CD8-positive, alpha-beta T cell (primary cell): ENCODE measurements at regions of chr12 and their contacts with region 1.

Region 1: GRCh38 chr12:46303039-46303666 is 34.3 kb upstream of the SLC38A1 start:
- DNase-seq: peak; percentile 7 to 84 (median 59)
- ATAC-seq: peak; percentile 81
- H3K4me3 ChIP-seq: no peak overlapping the region
- H3K4me3 Mint-ChIP-seq: no peak overlapping the region
- H3K27ac ChIP-seq: no peak overlapping the region
- H3K27ac Mint-ChIP-seq: no peak overlapping the region
- H3K4me1 ChIP-seq: peaks cover 4% of the 10 kb centered on the region
- H3K4me1 Mint-ChIP-seq: peaks cover 21% of the 10 kb centered on the region
- H3K27me3 ChIP-seq: no peaks in the 10 kb centered on the region
- H3K27me3 Mint-ChIP-seq: no peaks in the 10 kb centered on the region
- CTCF ChIP-seq: peak; percentile 87

Region 2: DNA sequence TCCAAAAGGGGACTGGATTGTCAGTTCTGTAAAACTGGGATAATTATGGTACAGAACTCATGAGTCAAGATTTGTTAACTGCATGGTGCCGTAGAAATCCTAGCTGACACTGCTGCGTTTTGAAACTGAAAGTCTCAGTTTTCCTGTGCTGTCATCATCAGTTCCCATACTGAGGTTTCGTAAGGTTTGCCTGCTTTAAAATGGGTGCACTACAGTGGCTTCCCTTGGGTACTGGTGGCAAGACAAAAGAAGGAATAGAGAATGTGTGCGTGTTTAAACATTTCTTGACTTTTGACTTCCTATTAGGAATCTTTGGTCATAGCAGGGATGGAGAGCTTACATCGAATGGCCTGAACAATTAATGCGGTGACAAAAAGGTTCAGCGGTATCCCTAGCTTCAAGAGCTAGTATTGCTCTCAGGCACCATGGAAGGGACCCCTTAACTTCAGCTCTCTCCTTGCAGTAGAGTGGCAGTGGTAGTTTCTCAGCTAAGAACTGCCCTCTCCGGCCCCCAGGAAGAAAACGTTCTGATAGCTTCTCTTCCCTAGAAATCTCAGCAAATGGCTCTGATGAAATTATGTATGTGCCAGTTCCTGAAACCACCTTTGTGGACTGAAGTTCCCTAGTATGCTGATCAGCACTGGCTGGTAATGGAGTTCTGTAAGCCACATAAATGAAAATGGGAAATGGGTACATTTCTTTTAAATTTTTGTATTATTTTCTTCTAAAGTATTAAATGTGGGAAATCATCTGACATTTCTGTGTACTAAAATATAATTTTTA is 1058.4 kb before region 1 on chr12:
- CTCF ChIA-PET with region 1: no interaction called
- POLR2A ChIA-PET with region 1: no interaction called
- intact Hi-C with region 1: no loop called
- DNase-seq: peak in 2 of 9 experiments; percentile 15 to 50
- ATAC-seq: peak; percentile 51
- H3K4me3 ChIP-seq: peak overlapping the region in 1 of 2 experiments; percentile 1
- H3K4me3 Mint-ChIP-seq: peak overlapping the region; percentile 70
- H3K27ac ChIP-seq: no peak overlapping the region
- H3K27ac Mint-ChIP-seq: peak overlapping the region; percentile 64
- H3K4me1 ChIP-seq: no peaks in the 10 kb centered on the region
- H3K4me1 Mint-ChIP-seq: peaks cover 21% of the 10 kb centered on the region
- H3K27me3 ChIP-seq: no peaks in the 10 kb centered on the region
- H3K27me3 Mint-ChIP-seq: no peaks in the 10 kb centered on the region
- CTCF ChIP-seq: no peak

Region 3: GRCh38 chr12:46124848-46125619 is 178.1 kb before region 1 on chr12:
- CTCF ChIA-PET with region 1: interaction called, 67 read pairs
- POLR2A ChIA-PET with region 1: interaction called, 4 read pairs
- intact Hi-C with region 1: loop called (anchors 1 to 2 kb)
- DNase-seq: peak; percentile 9 to 86 (median 53)
- ATAC-seq: peak; percentile 96
- H3K4me3 ChIP-seq: no peak overlapping the region
- H3K4me3 Mint-ChIP-seq: peak overlapping the region; percentile 7
- H3K27ac ChIP-seq: no peak overlapping the region
- H3K27ac Mint-ChIP-seq: peak overlapping the region; percentile 70
- H3K4me1 ChIP-seq: no peaks in the 10 kb centered on the region
- H3K4me1 Mint-ChIP-seq: peaks cover 4% of the 10 kb centered on the region
- H3K27me3 ChIP-seq: no peaks in the 10 kb centered on the region
- H3K27me3 Mint-ChIP-seq: peaks cover 7% of the 10 kb centered on the region
- CTCF ChIP-seq: peak; percentile 69

Region 4: DNA sequence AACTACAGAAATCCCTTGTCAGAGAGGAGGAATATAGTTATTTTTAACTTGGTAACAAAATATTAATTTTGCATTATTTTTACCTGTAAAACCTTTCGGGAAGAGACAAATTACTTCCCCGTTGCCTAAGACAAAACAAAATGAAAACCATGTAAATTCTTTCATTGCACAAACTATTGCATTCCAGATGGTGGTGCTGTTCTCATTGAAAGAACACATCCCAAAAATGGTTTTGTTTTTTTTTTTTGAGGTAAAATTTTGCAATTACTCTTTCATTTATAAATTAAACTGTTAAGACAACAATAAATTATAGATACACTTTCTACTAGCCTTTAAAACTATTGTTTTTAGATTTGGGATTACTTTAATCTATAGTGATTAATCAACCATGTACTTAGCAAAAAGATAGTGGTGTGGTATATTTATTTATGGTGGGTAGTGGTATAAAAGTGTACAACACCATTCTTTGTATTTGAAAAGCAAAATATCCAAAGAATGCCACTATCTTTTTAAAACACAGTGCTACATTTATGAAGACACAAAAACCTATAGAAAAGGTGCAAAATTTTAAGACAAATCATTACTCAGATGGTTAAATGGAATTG is 149.8 kb before region 1 on chr12:
- CTCF ChIA-PET with region 1: interaction called, 25 read pairs
- POLR2A ChIA-PET with region 1: interaction called, 3 read pairs
- intact Hi-C with region 1: loop called (anchors 1 kb)
- DNase-seq: peak in 2 of 9 experiments; percentile 40 to 65
- ATAC-seq: no peak
- H3K4me3 ChIP-seq: no peak overlapping the region
- H3K4me3 Mint-ChIP-seq: no peak overlapping the region
- H3K27ac ChIP-seq: no peak overlapping the region
- H3K27ac Mint-ChIP-seq: no peak overlapping the region
- H3K4me1 ChIP-seq: peaks cover 13% of the 10 kb centered on the region
- H3K4me1 Mint-ChIP-seq: peaks cover 19% of the 10 kb centered on the region
- H3K27me3 ChIP-seq: no peaks in the 10 kb centered on the region
- H3K27me3 Mint-ChIP-seq: peaks cover 1% of the 10 kb centered on the region
- CTCF ChIP-seq: peak; percentile 97

Region 5: DNA sequence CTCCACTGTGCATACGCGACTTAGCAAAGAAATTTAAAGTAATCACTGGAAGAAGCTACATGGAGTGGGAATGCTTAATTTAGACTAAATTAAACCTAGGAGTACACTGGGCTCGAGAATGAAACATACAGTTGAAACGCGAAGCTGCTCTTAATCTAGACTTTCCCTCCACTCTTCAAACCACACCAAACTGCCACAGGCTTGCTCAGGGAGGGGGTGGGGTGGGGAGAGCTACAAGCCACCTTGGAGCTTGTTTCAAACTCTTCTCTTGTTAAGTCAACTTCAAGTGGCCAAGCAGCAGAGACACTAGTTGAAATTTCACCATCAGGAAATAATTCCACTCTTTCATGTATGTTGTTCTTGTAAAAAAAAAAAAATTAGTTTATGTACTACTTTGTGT is 104.2 kb before region 1 on chr12:
- CTCF ChIA-PET with region 1: interaction called, 10 read pairs
- POLR2A ChIA-PET with region 1: no interaction called
- intact Hi-C with region 1: loop called in 1 of 2 experiments (anchors 2 kb)
- DNase-seq: peak in 1 of 9 experiments; percentile 34
- ATAC-seq: no peak
- H3K4me3 ChIP-seq: no peak overlapping the region
- H3K4me3 Mint-ChIP-seq: no peak overlapping the region
- H3K27ac ChIP-seq: no peak overlapping the region
- H3K27ac Mint-ChIP-seq: peak overlapping the region; percentile 73
- H3K4me1 ChIP-seq: peaks cover 11% of the 10 kb centered on the region
- H3K4me1 Mint-ChIP-seq: peaks cover 38% of the 10 kb centered on the region
- H3K27me3 ChIP-seq: no peaks in the 10 kb centered on the region
- H3K27me3 Mint-ChIP-seq: no peaks in the 10 kb centered on the region
- CTCF ChIP-seq: no peak

Region 6: DNA sequence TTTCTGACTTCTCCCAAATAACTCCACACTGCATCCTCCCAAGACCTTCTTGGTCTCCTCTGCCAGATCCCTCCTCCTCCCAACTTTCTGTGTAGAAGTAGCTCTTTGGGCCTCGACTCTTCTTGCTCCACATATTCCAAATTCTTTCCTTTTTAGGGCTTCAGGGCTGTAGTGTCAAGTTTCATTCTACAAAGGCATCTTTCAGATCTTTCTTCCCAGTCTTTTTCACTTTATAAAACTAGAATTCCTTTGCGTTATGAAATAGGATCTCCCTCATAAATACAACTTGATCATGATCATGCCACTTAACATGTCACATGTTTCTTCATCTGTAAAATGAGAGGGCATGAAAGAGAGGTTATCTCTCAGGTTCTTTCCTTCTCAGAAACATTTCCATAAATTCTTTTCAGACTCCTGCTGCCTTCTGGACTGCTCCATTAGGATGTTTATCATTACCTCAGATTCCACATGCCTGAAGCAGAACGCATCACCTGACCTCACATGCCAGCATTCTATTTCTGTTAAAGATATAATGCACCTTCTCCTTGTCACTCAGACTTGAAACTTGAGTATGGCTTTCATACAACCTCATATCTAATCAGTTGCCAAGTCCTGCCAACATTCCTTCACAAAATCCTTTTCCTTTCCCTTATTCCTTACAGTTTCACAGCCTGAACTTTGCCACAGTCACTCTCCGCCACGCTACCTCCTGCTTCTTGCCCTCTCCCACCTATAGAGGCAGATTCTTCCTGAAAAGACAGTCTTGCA is 42.8 kb before region 1 on chr12:
- CTCF ChIA-PET with region 1: interaction called, 3 read pairs
- POLR2A ChIA-PET with region 1: interaction called, 3 read pairs
- intact Hi-C with region 1: loop called (anchors 5 to 10 kb)
- DNase-seq: no peak
- ATAC-seq: no peak
- H3K4me3 ChIP-seq: no peak overlapping the region
- H3K4me3 Mint-ChIP-seq: no peak overlapping the region
- H3K27ac ChIP-seq: peak overlapping the region in 1 of 2 experiments; percentile 33
- H3K27ac Mint-ChIP-seq: no peak overlapping the region
- H3K4me1 ChIP-seq: peaks cover 94% of the 10 kb centered on the region
- H3K4me1 Mint-ChIP-seq: peaks cover 54% of the 10 kb centered on the region
- H3K27me3 ChIP-seq: no peaks in the 10 kb centered on the region
- H3K27me3 Mint-ChIP-seq: no peaks in the 10 kb centered on the region
- CTCF ChIP-seq: no peak